Endothelial cell of umbilical vein (primary cell): ENCODE measurements at regions of chr1 and their contacts with region 1.

Region 1: DNA sequence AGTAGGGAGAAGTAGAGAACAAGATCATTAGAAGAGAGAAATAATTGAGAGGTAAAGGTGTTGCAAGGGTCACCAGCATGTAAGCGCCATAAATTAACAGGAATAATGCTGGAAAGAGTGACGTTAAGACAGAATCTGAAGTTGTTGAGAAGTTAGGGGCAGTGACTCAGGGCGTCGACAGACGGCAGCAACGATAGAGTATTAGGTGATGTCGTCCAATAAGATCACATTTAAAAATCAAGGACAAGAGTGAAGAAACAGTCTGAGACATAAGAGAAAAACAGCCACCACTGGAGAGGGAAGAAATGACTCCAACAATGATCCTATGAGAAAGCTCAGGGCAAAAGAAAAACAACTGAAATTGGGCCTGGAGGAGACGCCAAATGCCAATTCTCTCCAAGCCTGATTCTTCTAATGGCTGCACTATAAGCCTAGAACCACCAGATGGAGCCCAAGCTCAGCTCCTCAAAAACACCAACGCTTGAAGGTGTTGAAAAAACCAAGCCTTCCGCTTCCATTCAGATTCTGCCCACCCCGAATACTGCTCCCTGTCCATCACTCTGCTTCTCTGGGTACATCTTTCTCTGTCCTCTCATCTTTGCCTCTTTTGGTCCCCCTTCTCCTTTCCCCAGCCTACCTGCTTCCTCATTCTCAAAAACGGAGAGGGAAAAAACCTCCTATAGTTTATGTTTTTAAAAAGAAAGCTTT is 70.0 kb downstream of the LUZP1 start:
- DNase-seq: peak; percentile 78
- H3K4me3 ChIP-seq: no peak overlapping the region
- H3K27ac ChIP-seq: peak overlapping the region; percentile 83
- H3K4me1 ChIP-seq: peaks cover 53% of the 10 kb centered on the region
- H3K27me3 ChIP-seq: no peaks in the 10 kb centered on the region
- CTCF ChIP-seq: peak; percentile 90 to 93
- POLR2A ChIP-seq: no peak

Region 2: DNA sequence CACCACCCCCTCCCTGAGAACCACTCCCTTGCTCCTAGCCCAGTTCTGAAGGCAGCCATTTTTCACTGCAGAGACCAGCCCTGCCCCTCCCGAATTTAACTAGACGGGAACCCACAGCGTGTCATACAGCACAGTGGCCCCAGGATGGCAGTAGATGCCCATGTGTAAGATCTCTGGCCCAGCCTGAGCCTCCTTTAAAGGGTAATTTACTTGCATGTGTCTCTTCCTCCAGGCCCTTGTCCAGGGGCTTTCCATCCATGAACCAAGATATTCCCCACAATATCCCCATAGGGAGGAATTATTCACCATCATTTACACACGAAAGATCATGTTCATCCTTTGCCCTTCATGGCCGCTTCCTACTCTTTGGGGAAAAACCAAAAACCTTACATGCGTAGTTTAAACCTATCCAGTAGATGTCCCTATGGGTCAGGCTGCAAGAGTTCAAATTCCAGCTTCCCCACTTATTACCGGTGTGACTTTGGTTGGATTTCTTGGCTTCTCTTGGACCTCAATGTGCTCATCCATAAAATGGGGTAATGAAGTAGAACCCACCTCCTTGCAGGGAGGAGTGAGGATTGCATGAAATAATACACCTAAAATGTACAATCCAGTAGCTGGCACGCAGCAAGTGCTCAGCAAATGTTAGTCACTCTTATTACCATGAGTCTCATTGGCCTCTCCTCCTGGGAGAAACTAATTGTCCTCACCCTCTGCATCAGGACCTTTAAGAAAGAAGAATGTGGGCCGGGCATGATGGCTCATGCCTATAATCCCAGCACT is 122.0 kb before region 1 on chr1:
- CTCF ChIA-PET with region 1: interaction called, 8 read pairs
- POLR2A ChIA-PET with region 1: no interaction called
- dilution Hi-C with region 1: no loop called
- intact Hi-C with region 1: loop called (anchors 1 kb)
- DNase-seq: peak; percentile 83
- H3K4me3 ChIP-seq: no peak overlapping the region
- H3K27ac ChIP-seq: no peak overlapping the region
- H3K4me1 ChIP-seq: peaks cover 12% of the 10 kb centered on the region
- H3K27me3 ChIP-seq: no peaks in the 10 kb centered on the region
- CTCF ChIP-seq: peak; percentile 81 to 87
- POLR2A ChIP-seq: no peak

Region 3: GRCh38 chr1:23122023-23122748 is 23.6 kb after region 1 on chr1:
- CTCF ChIA-PET with region 1: interaction called, 15 read pairs
- POLR2A ChIA-PET with region 1: no interaction called
- dilution Hi-C with region 1: no loop called
- intact Hi-C with region 1: no loop called
- DNase-seq: peak; percentile 60
- H3K4me3 ChIP-seq: no peak overlapping the region
- H3K27ac ChIP-seq: no peak overlapping the region
- H3K4me1 ChIP-seq: peaks cover 43% of the 10 kb centered on the region
- H3K27me3 ChIP-seq: no peaks in the 10 kb centered on the region
- CTCF ChIP-seq: no peak
- POLR2A ChIP-seq: no peak

Region 4: DNA sequence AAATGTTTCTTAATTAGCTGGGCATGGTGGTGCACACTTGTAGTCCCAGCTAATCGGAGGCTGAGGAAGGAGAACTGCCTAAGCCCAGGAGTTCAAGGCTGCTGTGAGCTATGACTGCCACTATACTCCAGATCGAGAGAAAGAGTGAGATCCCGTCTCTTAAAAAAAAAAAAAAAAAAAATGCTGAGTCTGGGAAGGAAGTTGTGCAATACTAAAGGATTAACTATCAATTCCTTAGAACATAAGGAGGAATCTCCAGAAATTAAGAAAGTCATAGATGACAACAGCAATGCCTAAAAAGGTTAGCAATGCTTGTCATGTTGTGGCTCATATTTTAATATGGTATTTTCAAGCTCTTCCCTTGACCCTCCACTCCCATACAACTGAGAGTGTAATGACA is 64.8 kb after region 1 on chr1:
- CTCF ChIA-PET with region 1: interaction called, 84 read pairs
- POLR2A ChIA-PET with region 1: interaction called, 11 read pairs
- dilution Hi-C with region 1: no loop called
- intact Hi-C with region 1: loop called (anchors 1 kb)
- DNase-seq: no peak
- H3K4me3 ChIP-seq: no peak overlapping the region
- H3K27ac ChIP-seq: no peak overlapping the region
- H3K4me1 ChIP-seq: peaks cover 21% of the 10 kb centered on the region
- H3K27me3 ChIP-seq: no peaks in the 10 kb centered on the region
- CTCF ChIP-seq: no peak
- POLR2A ChIP-seq: no peak

Region 5: DNA sequence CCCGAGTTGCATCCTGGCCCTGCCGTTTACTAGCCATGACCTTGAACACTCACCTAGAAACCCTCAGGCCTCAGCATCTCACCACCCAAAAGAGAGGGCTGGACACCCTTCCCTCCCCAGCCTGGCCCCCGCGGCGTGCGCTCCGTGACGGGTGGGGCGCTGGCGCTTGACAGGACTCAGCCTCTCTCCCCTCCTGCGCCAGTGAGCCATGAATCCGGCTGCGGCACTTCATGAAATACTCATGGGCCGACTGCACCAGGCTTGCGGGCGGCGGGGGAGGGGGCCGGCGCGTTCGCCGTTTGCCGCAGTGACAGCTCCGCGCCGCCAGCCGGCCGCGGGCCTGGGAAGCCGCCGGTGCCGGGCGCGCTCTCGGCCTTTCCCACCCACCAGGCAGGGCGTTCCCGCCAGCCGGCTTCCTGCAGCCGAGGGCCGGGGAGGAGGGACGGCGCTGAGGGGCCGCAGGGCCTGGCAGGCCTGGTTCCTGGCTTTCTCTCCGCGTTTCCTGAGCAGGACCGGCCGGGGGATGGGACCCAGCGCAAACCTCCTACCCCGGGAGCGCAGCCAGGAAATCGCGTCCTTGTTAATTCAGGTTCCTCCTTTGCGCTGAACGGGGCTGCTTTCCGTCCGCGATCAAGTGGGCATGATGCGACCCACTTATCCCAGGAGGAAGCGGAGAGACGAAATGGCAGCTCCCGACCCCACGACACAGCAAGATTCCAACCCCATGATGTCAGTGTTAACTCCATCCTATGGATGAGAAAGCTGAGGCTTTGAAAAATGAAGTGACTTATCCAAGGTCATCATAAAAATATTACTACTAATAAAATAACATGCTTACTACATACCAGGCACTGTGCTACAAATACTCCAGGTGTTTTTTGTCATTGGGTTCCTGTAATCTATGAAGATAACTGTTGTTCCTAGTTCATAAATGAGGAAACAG is 79.1 kb after region 1 on chr1:
- CTCF ChIA-PET with region 1: interaction called, 671 read pairs
- POLR2A ChIA-PET with region 1: interaction called, 5 read pairs
- dilution Hi-C with region 1: loop called (anchors 10 kb)
- intact Hi-C with region 1: no loop called
- DNase-seq: peak; percentile 97
- H3K4me3 ChIP-seq: peak overlapping the region; percentile 23 to 57 (median 50)
- H3K27ac ChIP-seq: peak overlapping the region; percentile 77
- H3K4me1 ChIP-seq: peaks cover 15% of the 10 kb centered on the region
- H3K27me3 ChIP-seq: no peaks in the 10 kb centered on the region
- CTCF ChIP-seq: peak; percentile 5 to 18
- POLR2A ChIP-seq: peak; percentile 66